Colonic mucosa (tissue), 4 donors: ENCODE measurements at regions of chrX and their contacts with region 1.

Region 1: DNA sequence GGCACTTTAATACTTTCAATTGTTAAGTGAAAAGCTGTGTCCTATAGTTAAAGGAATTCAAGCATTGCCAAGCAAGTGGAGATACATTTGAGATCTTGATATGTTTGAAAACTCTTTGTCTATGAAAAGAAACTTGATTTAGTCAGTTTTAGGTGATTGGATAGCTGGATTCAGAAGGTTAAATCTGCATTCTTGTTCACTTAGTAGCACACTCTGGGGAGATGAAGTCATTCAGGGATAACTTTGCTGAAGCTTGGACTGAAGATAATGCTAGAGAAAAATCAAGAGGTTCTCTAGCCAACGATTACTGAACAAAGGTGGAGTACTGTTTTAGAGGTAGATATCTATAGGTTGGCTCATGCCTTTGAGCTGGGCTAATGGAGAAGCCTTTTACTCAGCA is 90.6 kb downstream of the DCAF8L2 start:
- DNase-seq: no peak
- H3K4me3 ChIP-seq: no peak overlapping the region
- H3K27ac ChIP-seq: no peak overlapping the region
- H3K4me1 ChIP-seq: no peaks in the 10 kb centered on the region
- H3K27me3 ChIP-seq: no peaks in the 10 kb centered on the region
- CTCF ChIP-seq: no peak

Region 2: GRCh38 chrX:27555514-27555913 is 125.2 kb before region 1 on chrX:
- intact Hi-C with region 1: loop called (anchors 5 kb)
- DNase-seq: no peak
- H3K4me3 ChIP-seq: no peak overlapping the region
- H3K27ac ChIP-seq: no peak overlapping the region
- H3K4me1 ChIP-seq: no peaks in the 10 kb centered on the region
- H3K27me3 ChIP-seq: no peaks in the 10 kb centered on the region
- CTCF ChIP-seq: peak; percentile 48